GM12878 (cell line): ENCODE measurements at regions of chr9 and their contacts with region 1.

Region 1: DNA sequence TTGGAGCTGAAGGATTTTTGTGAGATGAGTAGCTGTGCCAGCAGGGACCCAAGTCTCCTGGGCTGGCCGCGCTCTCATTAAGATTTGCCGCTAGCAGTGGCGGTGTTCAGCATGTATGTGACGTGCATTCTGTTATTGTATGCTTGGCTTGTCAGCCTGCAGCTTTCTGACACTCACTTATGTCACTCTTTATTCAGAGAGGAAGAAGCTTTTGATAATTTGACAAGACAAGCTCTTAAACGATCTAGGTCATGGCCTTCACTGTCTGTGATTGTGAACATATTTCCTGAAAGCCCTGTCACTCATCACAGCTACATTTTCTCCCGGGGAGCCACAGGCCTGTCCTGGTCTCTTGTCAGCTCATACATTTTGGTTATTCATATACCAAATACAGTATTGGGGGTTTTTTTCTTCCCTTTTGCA is 98.2 kb upstream of the GRHPR start:
- DNase-seq: peak; percentile 43
- ATAC-seq: peak; percentile 76
- H3K4me3 ChIP-seq: peak overlapping the region; percentile 18
- H3K27ac ChIP-seq: peak overlapping the region; percentile 93
- H3K4me1 ChIP-seq: peaks cover 30% of the 10 kb centered on the region
- H3K27me3 ChIP-seq: no peaks in the 10 kb centered on the region
- CTCF ChIP-seq: no peak
- EP300 ChIP-seq: no peak
- POLR2A ChIP-seq: 0 out of 2 replicates have a peak, but pooled peaks have one; percentile 48
- RAD21 ChIP-seq: no peak

Region 2: DNA sequence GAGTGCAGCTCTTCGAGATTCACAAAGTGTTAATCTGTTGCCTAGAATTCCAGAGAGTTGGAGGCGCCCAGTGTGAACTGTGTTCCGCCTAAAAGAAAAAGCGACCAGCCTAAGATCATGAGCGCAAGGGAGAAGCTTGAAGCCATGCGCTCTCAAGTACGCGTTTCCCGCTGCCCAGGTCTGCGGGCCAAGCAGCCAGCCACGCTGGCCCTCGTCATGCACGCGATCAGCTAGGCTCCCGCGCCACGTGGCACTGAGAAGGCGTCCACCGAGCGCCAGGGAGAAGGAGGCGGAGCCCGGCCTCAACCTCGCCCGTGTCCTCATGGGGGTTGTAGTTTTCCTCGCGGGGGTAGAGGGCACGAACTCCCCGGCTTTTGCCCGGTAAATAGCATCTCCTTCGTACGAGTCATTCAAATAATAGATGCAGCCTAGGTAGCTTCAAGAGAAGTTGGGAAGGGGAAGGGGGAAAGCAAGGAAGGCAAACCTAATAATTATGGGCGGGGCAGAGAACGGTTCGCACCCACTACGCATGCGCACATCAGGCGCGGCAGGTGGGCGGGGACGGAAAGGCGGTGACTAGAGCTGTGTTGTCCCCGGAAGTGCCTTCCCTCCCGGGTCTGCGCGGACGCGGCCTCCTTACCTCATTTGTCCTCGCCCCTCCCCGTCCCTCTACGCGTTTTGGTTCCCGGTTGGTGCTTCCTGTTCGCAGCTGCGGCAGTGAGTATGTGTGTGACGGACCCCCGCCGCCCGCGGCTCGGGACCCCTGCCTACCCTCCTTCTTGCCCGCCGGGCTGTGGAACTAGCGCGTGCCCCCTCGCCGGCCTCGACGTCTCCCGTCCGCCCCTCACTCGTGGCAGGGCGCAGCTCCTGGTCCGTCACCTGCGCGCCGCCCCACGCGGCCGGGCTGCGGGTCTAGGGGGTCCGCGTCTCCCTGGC is 204.1 kb before region 1 on chr9 and contains the start of gene ZCCHC7:
- CTCF ChIA-PET with region 1: interaction called, 3 read pairs
- POLR2A ChIA-PET with region 1: no interaction called
- RAD21 ChIA-PET with region 1: interaction called, 10 read pairs
- SMC1A ChIA-PET with region 1: interaction called, 8 read pairs
- in situ Hi-C with region 1: no loop called
- intact Hi-C with region 1: no loop called
- DNase-seq: peak; percentile 89
- ATAC-seq: peak; percentile 94
- H3K4me3 ChIP-seq: peak within 1 kb of the TSS; percentile 93
- H3K27ac ChIP-seq: peak within 1 kb of the TSS; percentile 93
- H3K4me1 ChIP-seq: peaks cover 8% of the 10 kb centered on the region
- H3K27me3 ChIP-seq: no peaks in the 10 kb centered on the region
- CTCF ChIP-seq: no peak
- EP300 ChIP-seq: no peak
- POLR2A ChIP-seq: peak; percentile 92
- RAD21 ChIP-seq: no peak
- polyA plus RNA-seq, gene ZCCHC7: 58.6 to 60.8 TPM

Region 3: GRCh38 chr9:37293664-37294524 is 30.4 kb before region 1 on chr9:
- CTCF ChIA-PET with region 1: interaction called, 21 read pairs
- POLR2A ChIA-PET with region 1: interaction called, 5 read pairs
- RAD21 ChIA-PET with region 1: interaction called, 38 read pairs
- SMC1A ChIA-PET with region 1: interaction called, 44 read pairs
- in situ Hi-C with region 1: no loop called
- intact Hi-C with region 1: no loop called
- DNase-seq: peak; percentile 91
- ATAC-seq: peak; percentile 73
- H3K4me3 ChIP-seq: no peak overlapping the region
- H3K27ac ChIP-seq: peak overlapping the region; percentile 90
- H3K4me1 ChIP-seq: peaks cover 60% of the 10 kb centered on the region
- H3K27me3 ChIP-seq: no peaks in the 10 kb centered on the region
- CTCF ChIP-seq: no peak
- EP300 ChIP-seq: peak; percentile 95 to 96
- POLR2A ChIP-seq: no peak
- RAD21 ChIP-seq: no peak

Region 4: GRCh38 chr9:37309136-37309535 is 15.1 kb before region 1 on chr9:
- CTCF ChIA-PET with region 1: interaction called, 32 read pairs
- POLR2A ChIA-PET with region 1: interaction called, 24 read pairs
- RAD21 ChIA-PET with region 1: interaction called, 42 read pairs
- SMC1A ChIA-PET with region 1: interaction called, 65 read pairs
- in situ Hi-C with region 1: no loop called
- intact Hi-C with region 1: no loop called
- DNase-seq: no peak
- ATAC-seq: peak; percentile 91
- H3K4me3 ChIP-seq: no peak overlapping the region
- H3K27ac ChIP-seq: peak overlapping the region; percentile 22
- H3K4me1 ChIP-seq: peaks cover 11% of the 10 kb centered on the region
- H3K27me3 ChIP-seq: no peaks in the 10 kb centered on the region
- CTCF ChIP-seq: peak; percentile 55 to 62 (median 58)
- EP300 ChIP-seq: no peak
- POLR2A ChIP-seq: no peak
- RAD21 ChIP-seq: peak; percentile 83

Region 5: GRCh38 chr9:37371565-37372464 is 47.5 kb after region 1 on chr9:
- CTCF ChIA-PET with region 1: interaction called, 8 read pairs
- POLR2A ChIA-PET with region 1: interaction called, 4 read pairs
- RAD21 ChIA-PET with region 1: interaction called, 5 read pairs
- SMC1A ChIA-PET with region 1: interaction called, 13 read pairs
- in situ Hi-C with region 1: no loop called
- intact Hi-C with region 1: no loop called
- DNase-seq: peak; percentile 63
- ATAC-seq: peak; percentile 44
- H3K4me3 ChIP-seq: no peak overlapping the region
- H3K27ac ChIP-seq: peak overlapping the region; percentile 97
- H3K4me1 ChIP-seq: peaks cover 78% of the 10 kb centered on the region
- H3K27me3 ChIP-seq: no peaks in the 10 kb centered on the region
- CTCF ChIP-seq: no peak
- EP300 ChIP-seq: peak in 1 of 2 experiments; percentile 33; a peak in 2 of 4 replicates
- POLR2A ChIP-seq: peak; percentile 7; the same call in 1 of the 2 replicates
- RAD21 ChIP-seq: no peak